SK-N-SH (cell line): ENCODE measurements at regions of chr13 and their contacts with region 1.

Region 1: DNA sequence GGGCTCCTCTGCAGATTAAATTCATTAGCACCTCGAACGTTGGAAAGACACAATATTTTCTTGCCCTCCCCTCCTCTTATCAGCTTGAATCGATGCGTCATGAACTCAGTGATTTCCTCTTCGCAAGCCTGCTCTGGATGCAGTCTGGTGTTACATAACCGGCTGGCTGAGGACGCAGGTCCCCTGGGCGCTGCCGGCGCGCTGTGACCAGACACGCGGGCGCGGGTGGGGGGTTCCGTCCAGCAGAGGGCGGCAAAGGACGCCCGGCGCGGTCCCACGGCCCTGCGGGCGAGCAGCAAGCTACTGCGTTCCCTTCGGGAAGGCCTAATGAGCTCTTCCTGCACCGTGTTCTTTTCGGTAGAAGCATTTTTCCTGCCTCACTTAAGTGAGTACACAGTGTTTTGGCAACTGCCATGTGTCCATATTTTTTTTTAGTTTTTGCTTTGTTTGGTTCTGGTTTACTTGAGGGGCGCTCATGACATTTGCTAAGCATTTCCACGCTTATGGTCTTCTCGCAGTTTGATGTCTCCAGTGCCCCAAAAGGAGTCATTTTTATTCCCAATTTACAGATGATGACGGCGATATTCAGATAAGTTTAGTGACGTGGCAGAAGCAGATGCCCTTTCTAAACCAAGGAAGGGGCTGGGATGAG is 112.2 kb upstream of the MBNL2 start:
- DNase-seq: peak; percentile 91
- H3K4me3 ChIP-seq: peak overlapping the region in 1 of 2 experiments; percentile 24; a peak in 2 of 4 replicates
- H3K27ac ChIP-seq: peak overlapping the region in 1 of 2 experiments; percentile 60; a peak in 1 of 4 replicates
- H3K4me1 ChIP-seq: peaks cover 24 to 36% of the 10 kb centered on the region in 2 experiments
- H3K27me3 ChIP-seq: no peaks in the 10 kb centered on the region
- CTCF ChIP-seq: peak; percentile 94
- EP300 ChIP-seq: peak; percentile 27 to 72; a peak in 2 of 4 replicates
- RAD21 ChIP-seq: peak; percentile 97

Region 2: DNA sequence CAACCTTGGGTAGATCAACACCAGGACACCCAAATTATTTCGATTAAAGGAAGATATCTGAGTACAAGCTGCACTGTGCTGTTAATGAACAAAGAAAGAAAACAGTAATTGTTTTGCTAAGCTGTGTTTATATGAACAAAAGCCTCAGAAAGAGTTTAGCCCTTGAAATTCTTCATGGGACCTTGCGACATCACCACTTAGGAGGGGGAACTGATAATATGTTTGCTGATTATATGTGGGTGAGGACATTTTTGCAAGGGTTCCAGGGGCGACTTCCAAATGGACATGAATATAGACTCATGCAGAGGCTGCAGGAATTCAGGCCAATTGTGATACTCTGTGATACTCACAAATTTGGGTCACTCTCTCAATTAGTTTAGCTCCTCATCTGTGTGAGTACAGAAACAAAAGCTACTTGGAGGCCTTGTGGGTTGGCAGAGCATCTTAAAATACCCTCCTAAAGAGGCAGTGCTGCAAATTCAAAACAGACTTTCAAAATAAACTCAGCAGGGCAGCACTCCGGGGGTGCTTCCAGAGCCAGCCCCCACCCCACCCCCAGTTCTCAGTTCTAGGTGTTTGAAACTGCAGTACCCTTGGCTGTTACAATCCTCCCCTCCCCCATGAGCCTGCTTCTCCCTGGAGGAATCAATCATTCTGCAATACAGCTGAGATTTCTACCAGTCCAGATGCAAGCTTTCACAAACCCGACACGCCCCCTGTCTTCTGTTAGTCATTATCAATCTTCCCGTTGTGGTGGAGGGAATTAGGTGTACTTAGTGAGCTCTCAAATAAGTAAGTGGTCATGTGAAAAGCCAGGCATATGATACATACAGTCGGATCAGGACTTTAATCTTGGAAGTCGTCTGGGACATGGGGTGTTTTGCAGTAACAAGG is 15.2 kb after region 1 on chr13:
- CTCF ChIA-PET with region 1: interaction called, 26 read pairs
- POLR2A ChIA-PET with region 1: no interaction called
- DNase-seq: peak; percentile 50
- H3K4me3 ChIP-seq: no peak overlapping the region
- H3K27ac ChIP-seq: peak overlapping the region; percentile 34 to 67
- H3K4me1 ChIP-seq: peaks cover 20 to 45% of the 10 kb centered on the region in 2 experiments
- H3K27me3 ChIP-seq: no peaks in the 10 kb centered on the region
- CTCF ChIP-seq: no peak; the same call in none of the 2 replicates
- EP300 ChIP-seq: 0 out of 4 replicates have a peak, but pooled peaks of 1 of the 2 experiments have one; percentile 17
- RAD21 ChIP-seq: no peak; the same call in 1 of the 2 replicates

Region 3: DNA sequence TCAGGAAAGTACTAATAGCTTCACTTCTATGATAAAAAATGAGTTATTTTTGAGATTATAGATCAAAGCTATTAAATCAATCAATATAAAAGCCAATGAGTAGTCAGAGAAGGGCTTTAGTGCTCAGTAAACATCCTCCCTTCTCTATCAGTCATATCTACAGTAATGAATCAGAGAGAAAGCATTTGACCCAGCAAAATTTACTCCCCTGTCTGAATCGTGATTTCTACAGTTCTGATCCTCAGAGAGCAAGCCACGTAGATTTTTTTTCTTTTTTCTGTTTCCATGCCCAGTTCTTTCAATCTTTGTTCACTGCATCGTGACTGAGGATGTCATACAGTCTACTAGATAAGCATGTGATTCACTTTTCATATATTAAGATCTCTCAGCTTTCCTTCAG is 96.0 kb after region 1 on chr13:
- CTCF ChIA-PET with region 1: interaction called, 30 read pairs
- POLR2A ChIA-PET with region 1: no interaction called
- DNase-seq: no peak
- H3K4me3 ChIP-seq: no peak overlapping the region
- H3K27ac ChIP-seq: peak overlapping the region; percentile 53 to 58; a peak in 3 of 4 replicates
- H3K4me1 ChIP-seq: peaks cover 0 to 3% of the 10 kb centered on the region in 2 experiments; a peak in 2 of 4 replicates
- H3K27me3 ChIP-seq: no peaks in the 10 kb centered on the region
- CTCF ChIP-seq: no peak
- EP300 ChIP-seq: peak in 1 of 2 experiments; percentile 42; a peak in 1 of 4 replicates
- RAD21 ChIP-seq: no peak

Region 4: GRCh38 chr13:97235549-97236231 is 125.7 kb after region 1 on chr13:
- CTCF ChIA-PET with region 1: interaction called, 19 read pairs
- POLR2A ChIA-PET with region 1: no interaction called
- DNase-seq: peak; percentile 47
- H3K4me3 ChIP-seq: peak overlapping the region; percentile 23 to 45
- H3K27ac ChIP-seq: peak overlapping the region; percentile 63
- H3K4me1 ChIP-seq: peaks cover 23 to 33% of the 10 kb centered on the region in 2 experiments
- H3K27me3 ChIP-seq: no peaks in the 10 kb centered on the region
- CTCF ChIP-seq: no peak
- EP300 ChIP-seq: peak; percentile 15 to 54; a peak in 2 of 4 replicates
- RAD21 ChIP-seq: no peak

Region 5: GRCh38 chr13:97328222-97328790 is 218.3 kb after region 1 on chr13:
- CTCF ChIA-PET with region 1: interaction called, 25 read pairs
- POLR2A ChIA-PET with region 1: no interaction called
- DNase-seq: no peak
- H3K4me3 ChIP-seq: no peak overlapping the region
- H3K27ac ChIP-seq: peak overlapping the region; percentile 70 to 74
- H3K4me1 ChIP-seq: peaks cover 21 to 23% of the 10 kb centered on the region in 2 experiments
- H3K27me3 ChIP-seq: no peaks in the 10 kb centered on the region
- CTCF ChIP-seq: no peak
- EP300 ChIP-seq: peak in 1 of 2 experiments; percentile 23; a peak in 1 of 4 replicates
- RAD21 ChIP-seq: no peak

Region 6: GRCh38 chr13:97353927-97354675 is 244.1 kb after region 1 on chr13:
- CTCF ChIA-PET with region 1: interaction called, 222 read pairs
- POLR2A ChIA-PET with region 1: no interaction called
- DNase-seq: no peak
- H3K4me3 ChIP-seq: no peak overlapping the region
- H3K27ac ChIP-seq: peak overlapping the region in 1 of 2 experiments; percentile 6; a peak in 1 of 4 replicates
- H3K4me1 ChIP-seq: 0 out of 4 replicates have a peak, but pooled peaks cover 0 to 9% of the 10 kb centered on the region in 2 experiments
- H3K27me3 ChIP-seq: no peaks in the 10 kb centered on the region
- CTCF ChIP-seq: no peak
- EP300 ChIP-seq: no peak
- RAD21 ChIP-seq: no peak

Region 7: DNA sequence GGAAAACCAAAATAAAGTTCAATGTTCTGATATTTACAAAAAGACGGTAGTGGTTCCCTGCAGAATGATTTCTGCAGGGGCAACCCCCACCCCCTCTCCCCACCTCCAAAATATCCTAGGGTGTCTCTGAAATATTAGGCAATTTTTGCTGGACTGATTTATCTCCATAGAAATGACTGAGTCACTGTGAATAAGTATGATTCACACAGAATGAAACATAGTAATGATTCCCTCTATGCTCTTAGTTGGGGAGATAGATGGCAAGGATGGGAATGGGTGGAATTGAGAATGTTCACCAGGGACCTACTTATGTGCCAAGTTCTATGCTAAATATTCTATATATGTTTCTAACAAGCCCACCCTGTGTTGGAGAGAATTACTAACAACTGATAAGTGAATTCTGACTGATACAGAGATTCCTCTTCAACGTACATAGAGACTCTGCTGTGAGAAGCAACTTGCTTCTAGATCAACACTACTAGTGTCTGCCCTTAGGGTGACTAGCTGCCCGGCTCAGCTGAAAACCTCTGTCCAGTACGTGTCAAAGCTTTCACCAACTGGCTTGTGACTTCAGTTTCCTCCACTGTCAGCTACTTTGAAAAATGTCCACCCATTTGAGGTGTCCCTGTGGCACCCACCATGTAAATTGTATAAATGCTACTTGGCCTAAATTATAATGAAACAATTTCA is 285.6 kb after region 1 on chr13:
- CTCF ChIA-PET with region 1: no interaction called
- POLR2A ChIA-PET with region 1: no interaction called
- DNase-seq: no peak
- H3K4me3 ChIP-seq: no peak overlapping the region
- H3K27ac ChIP-seq: peak overlapping the region in 1 of 2 experiments; percentile 29; a peak in 2 of 4 replicates
- H3K4me1 ChIP-seq: peaks cover 0 to 21% of the 10 kb centered on the region in 2 experiments; a peak in 2 of 4 replicates
- H3K27me3 ChIP-seq: no peaks in the 10 kb centered on the region
- CTCF ChIP-seq: no peak
- EP300 ChIP-seq: no peak
- RAD21 ChIP-seq: no peak